Activated T-helper 1 cell treated with anti-CD3 and anti-CD28 coated beads, Interleukin-12 subunit alpha, Interleukin-12 subunit beta, Interleukin-2, Interleukin-4 antibody, amounts not matched to agents 30 ng/mL and 10 ng/mL and 1 ng/mL, durations not matched to agents 14 hours and 24 hours and 36 hours (primary cell): ENCODE measurements at regions of chr6 and their contacts with region 1.

Region 1: GRCh38 chr6:20542927-20543602 is 8.8 kb downstream of the CDKAL1 start:
- DNase-seq: peak; percentile 35
- H3K4me3 Mint-ChIP-seq: peak overlapping the region; percentile 66
- H3K27ac Mint-ChIP-seq: peak overlapping the region; percentile 91
- H3K4me1 Mint-ChIP-seq: peaks cover 50% of the 10 kb centered on the region
- H3K27me3 Mint-ChIP-seq: no peaks in the 10 kb centered on the region

Region 2: GRCh38 chr6:20564269-20564668 is 21.2 kb after region 1 on chr6:
- intact Hi-C with region 1: loop called (anchors 1 kb)
- DNase-seq: no peak
- H3K4me3 Mint-ChIP-seq: no peak overlapping the region
- H3K27ac Mint-ChIP-seq: no peak overlapping the region
- H3K4me1 Mint-ChIP-seq: peaks cover 23% of the 10 kb centered on the region
- H3K27me3 Mint-ChIP-seq: no peaks in the 10 kb centered on the region

Region 3: DNA sequence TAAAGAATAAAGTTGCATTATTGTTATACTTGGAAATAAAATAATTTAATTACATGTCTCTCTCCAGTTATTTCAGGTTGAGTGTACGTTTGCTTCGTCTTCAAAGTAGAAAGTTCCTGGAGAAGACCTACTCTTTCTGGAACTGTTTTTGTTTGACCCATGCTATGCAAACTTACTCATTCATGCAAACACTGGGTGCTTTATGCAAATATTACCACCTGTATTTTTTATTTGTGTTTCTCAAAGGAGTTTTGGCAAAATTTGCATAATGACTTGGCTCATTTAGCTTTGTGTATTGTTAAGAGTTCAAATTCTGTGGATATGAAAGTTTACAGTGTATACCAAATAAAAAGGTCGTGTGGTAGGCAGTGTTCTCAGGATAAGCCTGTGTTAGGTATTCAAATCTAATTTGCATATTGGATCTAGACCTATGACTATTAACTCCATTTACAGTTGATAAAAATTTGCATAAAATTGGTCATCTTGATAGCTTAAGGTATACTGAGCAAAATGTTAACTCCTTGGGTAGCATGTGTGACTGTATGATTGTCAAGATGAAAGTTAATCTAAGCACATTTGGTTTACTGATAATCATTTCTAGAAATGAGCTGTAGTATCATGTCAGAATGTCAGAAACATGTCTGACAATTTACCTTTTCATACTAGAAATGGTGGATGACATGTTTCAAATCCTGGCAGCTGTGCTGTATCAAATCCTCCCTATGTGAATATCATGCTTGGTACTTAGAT is 56.4 kb after region 1 on chr6:
- intact Hi-C with region 1: loop called (anchors 1 kb)
- DNase-seq: no peak
- H3K4me3 Mint-ChIP-seq: no peak overlapping the region
- H3K27ac Mint-ChIP-seq: no peak overlapping the region
- H3K4me1 Mint-ChIP-seq: peaks cover 9% of the 10 kb centered on the region
- H3K27me3 Mint-ChIP-seq: no peaks in the 10 kb centered on the region

Region 4: DNA sequence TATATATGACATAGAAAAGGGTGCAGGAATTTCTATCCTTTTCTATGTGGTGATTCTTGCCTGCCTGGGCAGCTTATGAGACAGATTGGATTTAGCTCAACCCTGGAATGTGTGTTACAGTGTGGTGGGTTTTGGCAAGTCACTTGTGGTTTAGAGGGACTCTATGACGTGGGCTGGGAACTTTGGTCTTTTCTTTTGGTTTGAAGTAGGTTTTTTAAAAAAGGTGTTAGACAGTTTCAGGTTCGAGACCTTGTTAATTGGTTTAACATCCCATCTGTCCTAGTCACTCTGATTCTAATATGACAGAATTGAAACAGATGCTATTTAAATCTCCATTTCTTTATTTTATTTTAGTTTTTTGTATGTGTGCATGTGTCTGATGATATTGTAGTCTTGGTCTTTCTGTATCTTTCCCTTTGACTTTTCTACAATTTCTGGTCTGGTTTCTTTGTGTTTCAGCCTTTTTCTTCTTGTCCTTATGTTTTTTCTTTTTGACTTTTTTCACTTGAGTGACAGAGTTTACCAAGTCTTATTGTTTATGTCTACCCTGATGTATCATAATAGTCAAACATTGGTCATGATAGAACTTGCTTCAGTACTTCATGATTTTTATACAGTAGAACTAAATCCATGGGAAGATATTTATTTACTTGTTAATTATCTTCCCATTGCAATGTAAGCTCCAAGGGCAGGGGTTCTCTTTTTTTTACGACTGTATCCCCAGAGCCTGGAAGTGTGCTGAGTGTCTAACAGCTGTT is 165.5 kb after region 1 on chr6:
- intact Hi-C with region 1: loop called (anchors 5 kb)
- DNase-seq: no peak
- H3K4me3 Mint-ChIP-seq: no peak overlapping the region
- H3K27ac Mint-ChIP-seq: peak overlapping the region; percentile 75
- H3K4me1 Mint-ChIP-seq: peaks cover 43% of the 10 kb centered on the region
- H3K27me3 Mint-ChIP-seq: no peaks in the 10 kb centered on the region

Region 5: GRCh38 chr6:21694168-21694567 is 1151.1 kb after region 1 on chr6:
- intact Hi-C with region 1: no loop called
- DNase-seq: no peak
- H3K4me3 Mint-ChIP-seq: no peak overlapping the region
- H3K27ac Mint-ChIP-seq: no peak overlapping the region
- H3K4me1 Mint-ChIP-seq: no peaks in the 10 kb centered on the region
- H3K27me3 Mint-ChIP-seq: no peaks in the 10 kb centered on the region

Region 6: GRCh38 chr6:22102671-22103070 is 1559.6 kb after region 1 on chr6:
- intact Hi-C with region 1: loop called (anchors 5 kb)
- DNase-seq: no peak
- H3K4me3 Mint-ChIP-seq: no peak overlapping the region
- H3K27ac Mint-ChIP-seq: no peak overlapping the region
- H3K4me1 Mint-ChIP-seq: no peaks in the 10 kb centered on the region
- H3K27me3 Mint-ChIP-seq: no peaks in the 10 kb centered on the region